GM12878 (cell line): ENCODE measurements at regions of chr17 and their contacts with region 1.

Region 1: GRCh38 chr17:48543107-48543853 is 1.6 kb downstream of the HOXB2 start:
- DNase-seq: no peak
- ATAC-seq: peak; percentile 81
- H3K4me3 ChIP-seq: peak overlapping the region; percentile 69
- H3K27ac ChIP-seq: peak overlapping the region; percentile 49
- H3K4me1 ChIP-seq: peaks cover 7% of the 10 kb centered on the region
- H3K27me3 ChIP-seq: peaks cover 0 to 4% of the 10 kb centered on the region in 2 experiments; a peak in 1 of 4 replicates
- CTCF ChIP-seq: peak in 2 of 3 experiments; percentile 18 to 42; a peak in 3 of 6 replicates
- EP300 ChIP-seq: no peak
- POLR2A ChIP-seq: peak; percentile 63
- RAD21 ChIP-seq: no peak

Region 2: DNA sequence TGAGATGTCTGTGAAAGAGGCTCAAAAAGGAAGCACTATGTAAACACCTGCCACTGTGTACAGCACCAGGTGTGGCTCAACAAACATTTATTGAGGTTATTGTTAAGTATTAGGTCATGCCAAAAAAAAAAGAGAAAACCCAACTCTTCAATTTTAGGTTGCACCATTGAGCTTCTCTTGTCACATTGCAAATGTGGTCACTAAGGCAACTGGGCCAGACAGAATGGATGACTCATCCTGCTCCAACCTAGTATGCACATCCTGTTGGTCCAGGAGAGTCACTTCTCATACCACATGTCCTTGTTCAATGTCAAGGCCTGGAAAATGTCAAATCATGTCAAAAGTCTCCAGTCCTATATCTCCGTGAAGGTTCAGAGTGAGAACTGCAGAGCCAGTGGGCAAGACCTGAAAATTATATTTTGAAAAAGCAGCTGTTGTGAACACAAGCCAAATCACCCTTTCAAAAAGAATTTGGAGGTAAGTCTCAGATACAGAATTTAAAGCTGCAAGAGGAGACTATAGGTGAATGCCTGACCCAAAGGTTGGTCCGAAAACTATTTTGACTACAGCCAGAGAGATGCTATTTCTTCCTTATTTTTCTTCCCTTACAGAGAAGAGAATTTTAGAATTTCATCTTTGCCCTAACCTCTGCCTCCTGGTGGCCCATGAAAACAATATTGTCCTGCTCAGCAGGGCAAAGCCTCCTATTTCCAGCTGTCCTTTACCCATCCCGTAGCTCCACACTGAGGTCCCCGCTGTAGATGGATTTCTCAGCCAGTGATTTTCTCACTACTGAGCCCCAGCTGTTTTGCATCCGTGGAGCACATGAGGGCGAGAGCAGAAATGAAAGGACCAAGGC is 37.3 kb before region 1 on chr17:
- CTCF ChIA-PET with region 1: no interaction called
- POLR2A ChIA-PET with region 1: interaction called, 8 read pairs
- RAD21 ChIA-PET with region 1: interaction called, 9 read pairs
- SMC1A ChIA-PET with region 1: interaction called, 6 read pairs
- in situ Hi-C with region 1: no loop called
- intact Hi-C with region 1: loop called (anchors 2 kb)
- DNase-seq: peak; percentile 77
- ATAC-seq: peak; percentile 99
- H3K4me3 ChIP-seq: no peak overlapping the region
- H3K27ac ChIP-seq: no peak overlapping the region
- H3K4me1 ChIP-seq: peaks cover 26% of the 10 kb centered on the region
- H3K27me3 ChIP-seq: no peaks in the 10 kb centered on the region
- CTCF ChIP-seq: peak in 2 of 3 experiments; percentile 15 to 17; a peak in 1 of 6 replicates
- EP300 ChIP-seq: peak; percentile 49 to 82; a peak in 3 of 4 replicates
- POLR2A ChIP-seq: no peak
- RAD21 ChIP-seq: no peak

Region 3: GRCh38 chr17:48513097-48513496 is 30.2 kb before region 1 on chr17:
- CTCF ChIA-PET with region 1: interaction called, 3 read pairs
- POLR2A ChIA-PET with region 1: interaction called, 9 read pairs
- RAD21 ChIA-PET with region 1: interaction called, 9 read pairs
- SMC1A ChIA-PET with region 1: interaction called, 13 read pairs
- in situ Hi-C with region 1: no loop called
- intact Hi-C with region 1: loop called (anchors 2 kb)
- DNase-seq: no peak
- ATAC-seq: peak; percentile 53
- H3K4me3 ChIP-seq: peak overlapping the region; percentile 34; the same call in 1 of the 2 replicates
- H3K27ac ChIP-seq: peak overlapping the region; percentile 54
- H3K4me1 ChIP-seq: peaks cover 56% of the 10 kb centered on the region
- H3K27me3 ChIP-seq: no peaks in the 10 kb centered on the region
- CTCF ChIP-seq: no peak
- EP300 ChIP-seq: no peak
- POLR2A ChIP-seq: no peak
- RAD21 ChIP-seq: no peak